ENCODE measurements at regions of chr5 and their contacts with region 1.

Region 1: GRCh38 chr5:69093771-69094482 is at the start of gene SLC30A5:
- H3K4me3 ChIP-seq: peak within 1 kb of the TSS; percentile 84
- H3K27ac ChIP-seq: peak within 1 kb of the TSS; percentile 94
- H3K4me1 ChIP-seq: peaks cover 6% of the 10 kb centered on the region
- CTCF ChIP-seq: peak; percentile 97

Region 2: GRCh38 chr5:69083412-69083811 is 10.5 kb before region 1 on chr5:
- CTCF ChIA-PET with region 1: interaction called, 36 read pairs
- POLR2A ChIA-PET with region 1: interaction called, 13 read pairs
- H3K4me3 ChIP-seq: no peak overlapping the region
- H3K27ac ChIP-seq: no peak overlapping the region
- H3K4me1 ChIP-seq: no peaks in the 10 kb centered on the region
- CTCF ChIP-seq: peak; percentile 39; the same call in 1 of the 2 replicates

Region 3: DNA sequence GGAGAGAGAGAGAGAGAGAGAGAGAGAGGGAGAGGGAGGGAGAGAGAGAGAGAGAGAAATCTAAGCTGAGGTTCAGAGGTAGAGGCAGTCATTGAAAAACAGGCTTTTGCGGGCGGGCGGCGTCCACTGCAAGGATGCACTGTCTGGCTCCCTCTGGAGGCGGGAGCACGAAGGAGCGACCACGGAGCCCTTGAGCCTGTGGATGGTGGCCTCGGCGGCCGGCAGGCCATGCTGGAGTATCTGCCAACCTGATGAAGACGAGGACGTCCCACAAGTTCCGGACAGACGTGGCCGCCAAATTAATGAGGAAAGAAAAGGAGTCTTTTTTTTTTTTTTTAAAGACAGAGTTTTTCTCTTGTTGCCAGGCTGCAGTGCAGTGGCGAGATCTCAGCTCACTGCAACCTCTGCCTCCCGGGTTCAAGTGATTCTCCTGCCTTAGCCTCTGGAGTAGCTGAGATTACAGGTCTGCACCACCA is 240.9 kb after region 1 on chr5:
- CTCF ChIA-PET with region 1: interaction called, 12 read pairs
- POLR2A ChIA-PET with region 1: interaction called, 3 read pairs
- H3K4me3 ChIP-seq: no peak overlapping the region
- H3K27ac ChIP-seq: no peak overlapping the region
- H3K4me1 ChIP-seq: peaks cover 5% of the 10 kb centered on the region; the same call in 1 of the 2 replicates
- CTCF ChIP-seq: peak; percentile 82